Activated CD4-positive, alpha-beta T cell treated with anti-CD3 and anti-CD28 coated beads, Interleukin-2, amount 10 ng/mL, durations not matched to agents 24 days and 14 days (primary cell): ENCODE measurements at regions of chr3 and their contacts with region 1.

Region 1: GRCh38 chr3:195271116-195271858 is at the start of gene XXYLT1:
- DNase-seq: peak; percentile 97
- H3K4me3 Mint-ChIP-seq: peak within 1 kb of the TSS; percentile 88
- H3K27ac Mint-ChIP-seq: peak within 1 kb of the TSS; percentile 90
- H3K4me1 Mint-ChIP-seq: peaks cover 17% of the 10 kb centered on the region
- H3K27me3 Mint-ChIP-seq: no peaks in the 10 kb centered on the region
- total RNA-seq, gene XXYLT1: 14.5 and 17.4 TPM in 2 replicates

Region 2: GRCh38 chr3:195302431-195302830 is 31.1 kb after region 1 on chr3:
- intact Hi-C with region 1: no loop called
- DNase-seq: no peak
- H3K4me3 Mint-ChIP-seq: no peak overlapping the region
- H3K27ac Mint-ChIP-seq: no peak overlapping the region
- H3K4me1 Mint-ChIP-seq: peaks cover under 1% of the 10 kb centered on the region
- H3K27me3 Mint-ChIP-seq: no peaks in the 10 kb centered on the region

Region 3: DNA sequence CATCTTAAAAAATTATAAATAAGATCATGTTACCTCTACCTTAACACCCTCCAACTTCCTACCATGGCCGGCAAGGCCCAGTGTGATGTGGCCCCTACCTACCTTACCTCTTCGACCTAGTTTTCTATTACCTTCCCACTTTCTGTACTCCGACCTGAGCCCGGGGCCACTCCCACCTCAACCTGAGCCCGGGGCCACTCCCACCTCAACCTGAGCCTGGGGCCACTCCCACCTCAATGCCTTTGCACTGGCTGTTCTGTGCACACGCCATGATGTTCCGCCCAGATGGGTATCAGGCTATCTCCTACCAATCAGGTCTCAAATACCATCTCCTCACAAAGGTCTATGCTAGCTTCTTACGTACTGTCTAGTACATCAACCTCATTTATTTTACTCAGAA is 66.5 kb after region 1 on chr3:
- intact Hi-C with region 1: no loop called
- DNase-seq: no peak
- H3K4me3 Mint-ChIP-seq: no peak overlapping the region
- H3K27ac Mint-ChIP-seq: peak overlapping the region; percentile 39
- H3K4me1 Mint-ChIP-seq: peaks cover under 1% of the 10 kb centered on the region
- H3K27me3 Mint-ChIP-seq: no peaks in the 10 kb centered on the region

Region 4: GRCh38 chr3:195458316-195458717 is 187.0 kb after region 1 on chr3:
- intact Hi-C with region 1: loop called (anchors 5 kb)
- DNase-seq: peak; percentile 70
- H3K4me3 Mint-ChIP-seq: peak overlapping the region; percentile 36
- H3K27ac Mint-ChIP-seq: peak overlapping the region; percentile 32
- H3K4me1 Mint-ChIP-seq: peaks cover 9% of the 10 kb centered on the region
- H3K27me3 Mint-ChIP-seq: peaks cover 1% of the 10 kb centered on the region

Region 5: GRCh38 chr3:195522254-195523023 is 251.2 kb after region 1 on chr3:
- intact Hi-C with region 1: loop called (anchors 1 kb)
- DNase-seq: peak; percentile 73
- H3K4me3 Mint-ChIP-seq: no peak overlapping the region
- H3K27ac Mint-ChIP-seq: peak overlapping the region; percentile 18
- H3K4me1 Mint-ChIP-seq: peaks cover 25% of the 10 kb centered on the region
- H3K27me3 Mint-ChIP-seq: no peaks in the 10 kb centered on the region

Region 6: DNA sequence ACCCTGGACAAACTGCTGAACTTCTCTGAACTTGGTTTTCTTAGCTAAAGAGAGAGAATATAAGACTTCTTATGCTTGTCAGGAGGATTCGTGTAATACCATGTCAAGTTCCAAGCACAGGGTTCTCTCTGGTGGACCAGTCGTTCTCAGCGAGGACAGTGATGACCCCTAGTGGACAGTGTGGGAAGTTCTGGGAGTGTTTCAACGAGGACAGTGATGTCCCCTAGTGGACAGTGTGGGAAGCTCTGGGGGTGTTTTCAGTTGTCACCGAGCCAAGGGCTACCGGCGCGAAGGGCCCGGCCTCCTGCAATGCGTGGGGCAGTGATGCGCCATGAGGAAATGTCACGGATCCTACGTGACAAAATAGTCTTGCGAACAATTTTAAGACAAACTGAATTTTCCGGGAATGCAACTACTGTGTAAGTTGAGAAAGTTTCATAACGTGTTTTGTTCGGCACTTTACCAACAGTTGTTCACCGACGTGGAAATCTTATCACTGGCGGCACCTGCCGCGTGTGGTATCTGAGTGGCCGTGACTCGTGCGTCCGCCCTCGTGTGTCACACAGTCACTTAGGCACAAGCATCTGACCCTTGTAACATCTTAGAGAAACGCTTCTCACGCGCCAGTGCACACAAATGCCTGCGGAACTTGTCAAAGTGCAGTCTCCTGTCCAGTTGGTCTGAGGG is 579.7 kb after region 1 on chr3:
- intact Hi-C with region 1: loop called (anchors 2 kb)
- DNase-seq: peak; percentile 97
- H3K4me3 Mint-ChIP-seq: peak overlapping the region; percentile 5
- H3K27ac Mint-ChIP-seq: no peak overlapping the region
- H3K4me1 Mint-ChIP-seq: peaks cover 9% of the 10 kb centered on the region
- H3K27me3 Mint-ChIP-seq: no peaks in the 10 kb centered on the region

Region 7: GRCh38 chr3:195932456-195933430 is 661.5 kb after region 1 on chr3:
- intact Hi-C with region 1: no loop called
- DNase-seq: no peak
- H3K4me3 Mint-ChIP-seq: no peak overlapping the region
- H3K27ac Mint-ChIP-seq: no peak overlapping the region
- H3K4me1 Mint-ChIP-seq: no peaks in the 10 kb centered on the region
- H3K27me3 Mint-ChIP-seq: no peaks in the 10 kb centered on the region

Region 8: DNA sequence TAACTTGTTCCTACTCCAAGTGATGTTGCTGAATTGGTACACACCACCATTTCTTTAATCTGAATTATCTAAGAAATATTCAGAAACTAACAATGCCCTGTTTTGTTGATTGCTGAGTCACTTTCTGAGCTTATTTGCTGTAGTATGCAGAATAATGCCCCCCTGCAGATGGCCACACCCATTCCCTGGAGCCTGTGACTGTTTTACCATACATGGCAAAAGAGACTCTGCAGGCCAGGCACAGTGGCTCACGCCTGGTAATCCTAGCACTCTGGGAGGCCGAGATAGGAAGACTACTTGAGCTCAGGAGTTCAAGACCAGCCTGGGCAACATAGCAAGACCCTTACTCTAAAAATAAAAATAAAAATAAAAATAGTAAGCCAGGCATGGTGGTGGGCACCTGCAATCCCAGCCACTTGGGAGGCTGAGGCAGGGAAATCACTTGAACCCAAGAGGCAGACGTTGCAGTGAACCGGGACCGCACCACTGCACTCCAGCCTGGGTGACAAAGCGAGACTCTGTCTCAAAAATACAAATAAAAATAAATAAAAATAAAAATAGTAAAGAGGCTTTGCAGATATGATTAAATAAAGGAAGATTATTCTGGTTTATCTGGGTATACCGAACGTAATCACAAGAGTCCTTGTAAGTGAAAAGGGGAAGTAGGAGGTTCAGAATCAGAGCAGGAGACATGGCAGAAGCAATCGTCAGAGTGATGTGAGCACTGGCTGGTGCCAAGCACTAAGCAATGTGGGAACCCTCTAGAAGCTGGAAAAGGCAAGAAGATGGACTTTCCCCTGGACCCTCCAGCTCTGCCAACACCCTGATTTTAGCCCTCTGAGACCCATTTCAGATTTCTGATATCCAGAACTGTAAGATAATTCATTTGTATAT is 997.2 kb after region 1 on chr3:
- intact Hi-C with region 1: no loop called
- DNase-seq: no peak
- H3K4me3 Mint-ChIP-seq: no peak overlapping the region
- H3K27ac Mint-ChIP-seq: peak overlapping the region; percentile 48
- H3K4me1 Mint-ChIP-seq: peaks cover 32% of the 10 kb centered on the region
- H3K27me3 Mint-ChIP-seq: no peaks in the 10 kb centered on the region